Endothelial cell of umbilical vein (primary cell): ENCODE measurements at regions of chr17 and their contacts with region 1.

Region 1: DNA sequence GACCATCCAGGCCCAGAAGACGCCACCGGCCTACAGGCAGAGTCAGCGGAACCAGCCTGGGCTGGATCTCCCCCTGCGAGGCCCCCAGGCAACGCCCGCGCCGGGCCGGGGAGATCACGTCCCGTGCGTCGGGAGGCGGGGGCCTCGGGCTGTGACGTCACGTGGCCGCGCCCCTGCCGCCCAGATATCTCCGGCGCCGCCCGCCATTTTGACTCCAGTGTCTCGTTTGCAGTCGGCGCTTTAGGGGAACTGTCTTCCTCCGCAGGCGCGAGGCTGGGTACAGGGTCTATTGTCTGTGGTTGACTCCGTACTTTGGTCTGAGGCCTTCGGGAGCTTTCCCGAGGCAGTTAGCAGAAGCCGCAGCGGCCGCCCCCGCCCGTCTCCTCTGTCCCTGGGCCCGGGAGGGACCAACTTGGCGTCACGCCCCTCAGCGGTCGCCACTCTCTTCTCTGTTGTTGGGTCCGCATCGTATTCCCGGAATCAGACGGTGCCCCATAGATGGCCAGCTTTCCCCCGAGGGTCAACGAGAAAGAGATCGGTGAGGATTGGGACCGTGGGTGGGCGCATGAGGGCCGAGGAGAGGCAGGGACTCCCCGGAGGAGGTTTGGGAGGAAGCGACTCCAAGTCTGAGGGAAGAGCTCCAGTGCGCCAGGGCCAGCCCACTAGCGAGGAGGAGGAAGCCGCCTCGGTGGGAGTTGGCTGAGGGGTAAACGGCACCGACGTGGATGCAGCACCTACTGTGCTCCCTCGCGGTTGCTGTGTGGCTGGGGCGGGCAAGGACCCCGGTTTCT is at the start of gene WSB1:
- DNase-seq: peak; percentile 90
- H3K4me3 ChIP-seq: peak within 1 kb of the TSS; percentile 45 to 96 (median 86)
- H3K27ac ChIP-seq: peak within 1 kb of the TSS; percentile 94
- H3K4me1 ChIP-seq: peaks cover 14% of the 10 kb centered on the region
- H3K27me3 ChIP-seq: no peaks in the 10 kb centered on the region
- CTCF ChIP-seq: no peak
- POLR2A ChIP-seq: peak; percentile 99
- total RNA-seq, gene WSB1: 334 and 471 TPM in 2 replicates

Region 2: DNA sequence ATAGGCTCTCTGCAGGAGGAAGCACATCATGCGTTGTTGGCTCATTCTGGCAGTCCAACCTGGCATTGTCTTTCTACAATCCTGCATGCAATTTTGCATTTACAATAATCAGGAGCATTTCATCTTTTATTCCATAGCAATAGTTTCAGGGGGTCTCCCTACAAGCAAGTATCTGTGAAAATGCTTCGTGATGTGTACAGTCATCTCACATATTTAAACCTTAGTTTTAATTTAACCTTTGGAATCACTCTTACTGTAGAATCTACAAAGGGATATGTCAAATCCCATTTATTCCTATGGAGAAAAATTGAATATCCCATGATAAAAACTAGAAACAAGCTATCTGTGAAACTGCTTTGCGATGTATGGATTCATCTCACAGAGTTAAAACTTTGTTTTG is 112.2 kb before region 1 on chr17:
- CTCF ChIA-PET with region 1: no interaction called
- POLR2A ChIA-PET with region 1: no interaction called
- dilution Hi-C with region 1: no loop called
- intact Hi-C with region 1: no loop called
- DNase-seq: no peak
- H3K4me3 ChIP-seq: no peak overlapping the region
- H3K27ac ChIP-seq: no peak overlapping the region
- H3K4me1 ChIP-seq: no peaks in the 10 kb centered on the region
- H3K27me3 ChIP-seq: no peaks in the 10 kb centered on the region
- CTCF ChIP-seq: no peak
- POLR2A ChIP-seq: no peak

Region 3: GRCh38 chr17:27256225-27257030 is 37.7 kb before region 1 on chr17:
- CTCF ChIA-PET with region 1: interaction called, 3 read pairs
- POLR2A ChIA-PET with region 1: interaction called, 12 read pairs
- dilution Hi-C with region 1: no loop called
- intact Hi-C with region 1: loop called (anchors 1 kb)
- DNase-seq: peak; percentile 93
- H3K4me3 ChIP-seq: no peak overlapping the region
- H3K27ac ChIP-seq: peak overlapping the region; percentile 63
- H3K4me1 ChIP-seq: peaks cover 16% of the 10 kb centered on the region
- H3K27me3 ChIP-seq: no peaks in the 10 kb centered on the region
- CTCF ChIP-seq: no peak
- POLR2A ChIP-seq: no peak

Region 4: DNA sequence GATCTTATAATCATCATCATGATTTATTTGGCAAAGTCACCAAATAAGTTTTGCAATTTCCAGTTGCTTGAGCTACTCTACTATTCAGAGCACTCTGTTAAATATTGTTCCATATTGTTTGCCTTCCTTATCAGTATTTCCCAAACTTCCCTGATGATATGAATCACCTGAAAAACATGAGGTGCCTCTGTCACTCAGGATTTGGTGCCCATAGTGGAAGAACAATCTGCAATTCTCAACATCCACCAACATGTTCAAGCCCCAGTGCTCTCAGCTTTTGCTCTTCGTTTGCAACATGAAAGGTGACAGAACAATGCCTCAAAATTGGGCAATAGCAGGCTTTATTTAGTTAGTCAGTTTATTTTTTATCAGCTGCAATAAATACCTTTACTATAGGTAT is 28.8 kb before region 1 on chr17:
- CTCF ChIA-PET with region 1: interaction called, 7 read pairs
- POLR2A ChIA-PET with region 1: interaction called, 14 read pairs
- dilution Hi-C with region 1: no loop called
- intact Hi-C with region 1: loop called (anchors 1 kb)
- DNase-seq: peak; percentile 93
- H3K4me3 ChIP-seq: no peak overlapping the region
- H3K27ac ChIP-seq: peak overlapping the region; percentile 55
- H3K4me1 ChIP-seq: peaks cover 33% of the 10 kb centered on the region
- H3K27me3 ChIP-seq: peaks cover 0 to 4% of the 10 kb centered on the region in 2 experiments
- CTCF ChIP-seq: no peak
- POLR2A ChIP-seq: peak; percentile 63

Region 5: DNA sequence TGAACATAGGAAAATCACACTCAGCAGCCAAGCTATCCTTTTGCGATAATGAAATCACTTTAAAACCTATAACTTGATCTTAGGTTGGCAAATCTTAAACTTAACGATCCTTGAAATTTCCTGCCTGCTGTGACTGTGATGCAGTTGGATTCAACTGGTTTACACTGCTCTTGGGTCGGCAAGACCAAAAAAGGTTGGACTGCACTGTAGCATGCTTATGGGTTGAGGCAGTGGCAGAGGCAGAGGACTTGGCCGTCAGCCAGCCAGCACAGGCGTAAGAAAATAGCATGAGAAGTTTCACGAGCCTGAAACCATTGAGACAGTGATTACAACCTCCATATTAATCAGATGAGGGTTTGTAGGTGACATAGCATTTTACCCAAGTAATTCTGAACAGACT is 21.2 kb after region 1 on chr17:
- CTCF ChIA-PET with region 1: interaction called, 3 read pairs
- POLR2A ChIA-PET with region 1: interaction called, 4 read pairs
- dilution Hi-C with region 1: no loop called
- intact Hi-C with region 1: loop called (anchors 2 kb)
- DNase-seq: no peak
- H3K4me3 ChIP-seq: no peak overlapping the region
- H3K27ac ChIP-seq: no peak overlapping the region
- H3K4me1 ChIP-seq: no peaks in the 10 kb centered on the region
- H3K27me3 ChIP-seq: no peaks in the 10 kb centered on the region
- CTCF ChIP-seq: no peak
- POLR2A ChIP-seq: no peak

Region 6: GRCh38 chr17:27332485-27333409 is 38.7 kb after region 1 on chr17:
- CTCF ChIA-PET with region 1: interaction called, 13 read pairs
- POLR2A ChIA-PET with region 1: interaction called, 7 read pairs
- dilution Hi-C with region 1: no loop called
- intact Hi-C with region 1: loop called (anchors 1 kb)
- DNase-seq: peak; percentile 98
- H3K4me3 ChIP-seq: peak overlapping the region; percentile 3 to 65 (median 17)
- H3K27ac ChIP-seq: peak overlapping the region; percentile 78
- H3K4me1 ChIP-seq: peaks cover 16% of the 10 kb centered on the region
- H3K27me3 ChIP-seq: no peaks in the 10 kb centered on the region
- CTCF ChIP-seq: peak; percentile 91 to 97
- POLR2A ChIP-seq: peak; percentile 39

Region 7: GRCh38 chr17:27345141-27345904 is 51.2 kb after region 1 on chr17:
- CTCF ChIA-PET with region 1: interaction called, 4 read pairs
- POLR2A ChIA-PET with region 1: no interaction called
- dilution Hi-C with region 1: no loop called
- intact Hi-C with region 1: loop called (anchors 1 kb)
- DNase-seq: no peak
- H3K4me3 ChIP-seq: no peak overlapping the region
- H3K27ac ChIP-seq: peak overlapping the region; percentile 55
- H3K4me1 ChIP-seq: peaks cover 44% of the 10 kb centered on the region
- H3K27me3 ChIP-seq: no peaks in the 10 kb centered on the region
- CTCF ChIP-seq: no peak
- POLR2A ChIP-seq: no peak